Naive thymus-derived CD4-positive, alpha-beta T cell (primary cell): ENCODE measurements at regions of chr6 and their contacts with region 1.

Region 1: DNA sequence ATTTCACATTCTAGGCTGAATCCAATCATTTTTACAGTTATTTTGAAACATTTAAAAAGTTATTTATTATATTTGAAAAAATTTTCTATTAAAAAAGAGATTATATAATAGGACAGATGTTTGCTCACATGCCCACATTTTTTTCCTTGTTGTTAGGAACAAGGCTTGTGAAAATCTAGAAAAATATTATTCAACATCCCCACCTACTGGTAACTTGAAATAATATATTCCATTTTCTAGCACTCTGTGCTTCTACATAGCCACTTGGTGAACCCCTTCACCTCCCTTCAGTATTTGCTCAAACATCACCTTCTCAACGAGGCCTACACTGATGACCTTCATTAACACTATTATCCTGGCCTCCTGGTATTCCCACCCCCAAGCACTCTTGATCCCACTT is 18.3 kb upstream of the GPRC6A start:
- DNase-seq: no peak
- ATAC-seq: no peak
- H3K4me3 ChIP-seq: no peak overlapping the region
- H3K4me3 Mint-ChIP-seq: no peak overlapping the region
- H3K27ac ChIP-seq: no peak overlapping the region
- H3K27ac Mint-ChIP-seq: no peak overlapping the region
- H3K4me1 ChIP-seq: no peaks in the 10 kb centered on the region
- H3K4me1 Mint-ChIP-seq: no peaks in the 10 kb centered on the region
- H3K27me3 ChIP-seq: no peaks in the 10 kb centered on the region
- H3K27me3 Mint-ChIP-seq: peaks cover 0 to 27% (median 7%) of the 10 kb centered on the region in 5 donors

Region 2: DNA sequence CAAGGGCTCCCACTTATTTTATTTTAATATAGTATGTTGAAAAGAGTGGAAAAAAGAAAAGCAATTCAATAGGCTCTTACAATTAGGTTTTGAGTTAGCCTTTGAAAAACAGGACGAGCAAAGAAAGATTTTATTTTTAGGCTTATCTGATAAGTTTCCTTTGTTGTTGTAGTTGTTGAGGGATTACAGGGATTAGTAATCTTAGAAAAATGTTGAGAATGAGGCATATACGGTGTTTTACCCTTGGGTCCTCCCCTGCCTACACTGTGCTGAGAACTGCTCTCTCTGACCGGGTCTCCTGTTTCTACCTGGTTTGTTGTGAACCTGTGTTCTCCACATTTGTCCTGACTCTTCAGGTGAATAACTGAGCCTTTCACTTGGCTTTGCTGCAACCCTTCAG is 318.4 kb before region 1 on chr6:
- CTCF ChIA-PET with region 1: no interaction called
- POLR2A ChIA-PET with region 1: no interaction called
- intact Hi-C with region 1: no loop called
- DNase-seq: no peak
- ATAC-seq: no peak
- H3K4me3 ChIP-seq: no peak overlapping the region
- H3K4me3 Mint-ChIP-seq: no peak overlapping the region
- H3K27ac ChIP-seq: no peak overlapping the region
- H3K27ac Mint-ChIP-seq: no peak overlapping the region
- H3K4me1 ChIP-seq: no peaks in the 10 kb centered on the region
- H3K4me1 Mint-ChIP-seq: no peaks in the 10 kb centered on the region
- H3K27me3 ChIP-seq: no peaks in the 10 kb centered on the region
- H3K27me3 Mint-ChIP-seq: peaks cover 15 to 60% (median 34%) of the 10 kb centered on the region in 5 donors

Region 3: GRCh38 chr6:116779573-116780164 is 67.6 kb before region 1 on chr6:
- CTCF ChIA-PET with region 1: no interaction called
- POLR2A ChIA-PET with region 1: no interaction called
- intact Hi-C with region 1: loop called in 1 of 2 experiments (anchors 5 kb)
- DNase-seq: no peak
- ATAC-seq: no peak
- H3K4me3 ChIP-seq: no peak overlapping the region
- H3K4me3 Mint-ChIP-seq: no peak overlapping the region
- H3K27ac ChIP-seq: no peak overlapping the region
- H3K27ac Mint-ChIP-seq: no peak overlapping the region
- H3K4me1 ChIP-seq: peaks cover 0 to 3% of the 10 kb centered on the region in 2 donors
- H3K4me1 Mint-ChIP-seq: no peaks in the 10 kb centered on the region
- H3K27me3 ChIP-seq: peaks cover 0 to 3% of the 10 kb centered on the region in 2 donors
- H3K27me3 Mint-ChIP-seq: peaks cover 8 to 37% (median 28%) of the 10 kb centered on the region in 5 donors

Region 4: DNA sequence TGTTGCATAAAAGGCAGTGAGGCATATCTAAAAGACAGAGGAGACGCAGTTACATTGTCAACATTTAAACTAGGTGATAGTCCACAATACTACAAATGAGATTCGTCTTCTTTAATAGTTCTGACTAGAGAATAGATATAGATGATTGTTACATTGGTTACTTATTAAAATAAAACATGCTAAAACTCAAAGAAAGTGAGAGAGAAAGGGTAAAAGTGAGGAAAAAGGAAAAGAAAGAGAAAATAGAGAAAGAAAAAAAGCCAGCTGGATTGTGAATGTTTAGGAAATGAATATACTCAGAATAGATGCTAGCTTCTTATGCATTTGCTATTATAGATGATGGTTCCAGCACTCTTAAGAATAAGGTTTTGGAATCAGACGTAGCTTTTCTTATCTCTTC is 54.0 kb before region 1 on chr6:
- CTCF ChIA-PET with region 1: no interaction called
- POLR2A ChIA-PET with region 1: no interaction called
- intact Hi-C with region 1: no loop called
- DNase-seq: no peak
- ATAC-seq: no peak
- H3K4me3 ChIP-seq: no peak overlapping the region
- H3K4me3 Mint-ChIP-seq: no peak overlapping the region
- H3K27ac ChIP-seq: no peak overlapping the region
- H3K27ac Mint-ChIP-seq: no peak overlapping the region
- H3K4me1 ChIP-seq: no peaks in the 10 kb centered on the region
- H3K4me1 Mint-ChIP-seq: no peaks in the 10 kb centered on the region
- H3K27me3 ChIP-seq: no peaks in the 10 kb centered on the region
- H3K27me3 Mint-ChIP-seq: peaks cover 2 to 22% (median 13%) of the 10 kb centered on the region in 5 donors